Ovary (tissue), 10 donors: ENCODE measurements at regions of chr15 and their contacts with region 1.

Region 1: GRCh38 chr15:66700802-66701421 is 1.1 kb upstream of the SMAD6 start:
- DNase-seq: peak; percentile 96 to 98 (median 97)
- H3K4me3 ChIP-seq: peak overlapping the region; percentile 54
- H3K27ac ChIP-seq: peak overlapping the region; percentile 65 to 76
- H3K4me1 ChIP-seq: peaks cover 11% of the 10 kb centered on the region
- H3K27me3 ChIP-seq: no peaks in the 10 kb centered on the region
- CTCF ChIP-seq: no peak
- EP300 ChIP-seq: no peak
- POLR2A ChIP-seq: no peak

Region 2: GRCh38 chr15:66619151-66619903 is 81.6 kb before region 1 on chr15:
- intact Hi-C with region 1: loop called in 3 of 4 experiments (anchors 2 to 10 kb)
- DNase-seq: peak; percentile 72 to 86 (median 83)
- H3K4me3 ChIP-seq: no peak overlapping the region
- H3K27ac ChIP-seq: no peak overlapping the region
- H3K4me1 ChIP-seq: peaks cover 11% of the 10 kb centered on the region
- H3K27me3 ChIP-seq: no peaks in the 10 kb centered on the region
- CTCF ChIP-seq: peak; percentile 83 to 90 (median 85)
- EP300 ChIP-seq: no peak
- POLR2A ChIP-seq: no peak

Region 3: DNA sequence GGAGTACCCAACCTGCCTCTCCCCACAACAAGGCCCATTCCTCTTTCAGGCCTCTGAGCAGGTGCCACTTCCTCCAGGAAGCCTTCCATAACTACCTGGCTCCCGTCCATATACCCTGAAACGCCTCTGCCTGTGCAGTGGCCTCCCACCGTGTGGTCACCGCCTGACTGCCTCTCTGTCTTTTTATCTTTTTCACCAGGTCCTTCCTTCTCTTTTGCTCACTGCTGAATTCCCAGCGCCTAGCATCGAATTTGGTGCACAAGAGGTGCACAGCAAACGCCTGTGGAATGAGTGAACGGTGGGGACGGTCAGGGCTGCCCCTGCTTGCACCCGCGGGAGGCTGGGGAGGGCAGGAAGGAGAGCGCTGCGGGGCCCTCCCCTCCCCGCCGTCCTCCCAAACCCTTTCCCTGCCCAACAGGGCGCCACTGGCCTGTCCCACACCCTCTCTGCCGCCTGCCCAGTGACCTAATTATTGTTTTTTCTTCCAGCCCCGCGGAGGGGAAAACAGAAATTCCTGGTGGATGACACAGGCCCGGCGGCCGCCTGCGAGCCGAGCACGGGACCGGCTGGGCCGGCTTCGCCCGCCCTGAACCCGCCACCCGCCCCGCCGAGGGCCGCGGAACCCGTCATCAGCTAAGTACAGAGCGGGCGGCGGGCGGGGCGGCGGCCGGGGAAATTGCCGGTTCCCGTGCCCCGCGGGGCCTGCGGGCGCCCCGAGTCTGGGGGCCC is 141.2 kb after region 1 on chr15:
- intact Hi-C with region 1: loop called in 2 of 4 experiments (anchors 2 to 10 kb)
- DNase-seq: peak; percentile 88 to 92 (median 91)
- H3K4me3 ChIP-seq: peak overlapping the region; percentile 50
- H3K27ac ChIP-seq: peak overlapping the region; percentile 77 to 78
- H3K4me1 ChIP-seq: peaks cover 10% of the 10 kb centered on the region
- H3K27me3 ChIP-seq: no peaks in the 10 kb centered on the region
- CTCF ChIP-seq: no peak
- EP300 ChIP-seq: no peak
- POLR2A ChIP-seq: peak; percentile 32